ENCODE measurements at regions of chr7 and their contacts with region 1.

Region 1: DNA sequence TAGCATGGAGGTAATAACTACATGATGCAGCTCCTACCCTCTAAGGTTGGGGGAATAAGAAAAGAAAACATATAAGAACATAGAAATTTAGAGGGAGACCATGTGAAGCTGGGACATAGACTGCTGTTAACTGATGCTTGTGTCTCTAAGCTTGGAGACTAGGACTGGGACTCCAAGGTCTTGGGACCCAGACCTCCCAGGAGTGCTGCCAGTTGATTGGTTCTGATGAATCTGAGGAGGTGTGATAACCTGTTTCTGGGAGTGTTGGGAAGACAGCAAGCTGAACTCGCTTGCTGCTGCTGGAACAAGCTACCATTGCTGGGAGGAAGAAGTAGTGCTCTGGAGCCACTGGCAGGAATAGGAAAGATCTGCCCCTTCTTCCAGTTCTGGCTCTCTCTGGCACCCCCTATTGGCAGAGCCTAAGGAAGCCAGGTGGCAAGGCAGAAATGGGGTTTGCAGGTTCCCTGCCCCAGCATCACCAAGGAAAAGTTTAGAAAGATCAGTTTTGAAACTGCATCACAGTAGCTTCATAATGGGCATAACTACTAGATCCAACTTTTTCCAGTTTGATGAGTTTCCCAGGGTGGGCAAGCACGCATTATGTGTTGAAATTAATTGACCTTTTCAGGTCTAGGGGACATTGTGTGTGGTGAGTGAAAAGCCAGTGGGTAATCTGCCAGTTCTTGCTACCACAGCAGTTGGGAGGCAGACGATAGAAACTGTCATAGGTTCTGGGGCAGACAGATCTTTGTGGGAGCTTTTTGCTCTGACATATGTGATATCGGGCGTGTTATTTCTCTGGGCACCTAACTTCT is 140.7 kb downstream of the SND1 start:
- DNase-seq: peak; percentile 51
- H3K4me3 Mint-ChIP-seq: no peak overlapping the region
- H3K27ac Mint-ChIP-seq: no peak overlapping the region
- H3K4me1 Mint-ChIP-seq: peaks cover 22% of the 10 kb centered on the region
- H3K27me3 Mint-ChIP-seq: no peaks in the 10 kb centered on the region

Region 2: DNA sequence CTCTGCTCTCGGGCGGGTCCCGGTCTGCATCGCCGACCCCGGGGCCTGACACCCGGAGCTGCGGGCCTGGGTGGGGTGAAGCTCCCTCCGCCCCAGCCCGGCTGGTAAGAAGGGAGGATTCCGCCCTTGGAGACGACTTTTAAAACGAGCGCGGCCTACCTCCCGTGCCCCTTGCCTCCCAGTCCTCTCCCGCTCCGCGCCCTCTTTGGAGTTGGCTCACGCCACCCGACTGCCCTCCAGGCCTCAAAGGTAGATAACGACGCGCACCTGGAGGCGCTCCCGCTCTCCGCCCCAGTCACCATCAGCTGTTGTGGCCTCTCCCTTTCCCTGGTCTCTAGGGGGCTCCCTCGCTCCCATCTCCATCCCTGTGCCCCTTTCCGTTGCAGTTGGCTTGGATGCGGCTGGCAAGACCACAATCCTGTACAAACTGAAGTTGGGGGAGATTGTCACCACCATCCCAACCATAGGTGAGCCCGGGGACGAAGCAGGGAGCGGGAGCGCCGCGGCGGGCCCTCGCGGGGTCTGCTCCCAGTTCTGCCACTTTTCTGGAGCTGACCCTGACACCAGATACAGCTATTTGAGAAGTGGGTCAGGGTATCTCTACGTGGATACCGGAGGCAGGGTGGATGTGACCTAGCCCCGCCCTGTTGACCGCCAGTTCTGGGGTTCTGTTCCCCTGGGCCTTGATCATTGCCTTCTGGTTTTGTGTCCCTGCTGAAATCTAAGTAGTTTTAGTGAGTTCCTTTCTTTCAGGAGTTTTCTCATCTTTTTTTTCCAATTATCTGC is 203.8 kb before region 1 on chr7:
- CTCF ChIA-PET with region 1: no interaction called
- POLR2A ChIA-PET with region 1: no interaction called
- intact Hi-C with region 1: no loop called
- DNase-seq: peak; percentile 49
- H3K4me3 Mint-ChIP-seq: peak overlapping the region; percentile 85
- H3K27ac Mint-ChIP-seq: peak overlapping the region; percentile 74
- H3K4me1 Mint-ChIP-seq: peaks cover 34% of the 10 kb centered on the region
- H3K27me3 Mint-ChIP-seq: no peaks in the 10 kb centered on the region

Region 3: GRCh38 chr7:127708788-127709187 is 83.9 kb before region 1 on chr7:
- CTCF ChIA-PET with region 1: interaction called, 13 read pairs
- POLR2A ChIA-PET with region 1: no interaction called
- intact Hi-C with region 1: no loop called
- DNase-seq: peak; percentile 74
- H3K4me3 Mint-ChIP-seq: no peak overlapping the region
- H3K27ac Mint-ChIP-seq: no peak overlapping the region
- H3K4me1 Mint-ChIP-seq: peaks cover 5% of the 10 kb centered on the region
- H3K27me3 Mint-ChIP-seq: no peaks in the 10 kb centered on the region

Region 4: GRCh38 chr7:127765150-127765549 is 27.6 kb before region 1 on chr7:
- CTCF ChIA-PET with region 1: interaction called, 11 read pairs
- POLR2A ChIA-PET with region 1: no interaction called
- intact Hi-C with region 1: no loop called
- DNase-seq: no peak
- H3K4me3 Mint-ChIP-seq: no peak overlapping the region
- H3K27ac Mint-ChIP-seq: no peak overlapping the region
- H3K4me1 Mint-ChIP-seq: peaks cover 48% of the 10 kb centered on the region
- H3K27me3 Mint-ChIP-seq: no peaks in the 10 kb centered on the region

Measured in activated CD4-positive, alpha-beta memory T cell treated with anti-CD3 and anti-CD28 coated beads for 36 hours (primary cell).